ENCODE measurements at regions of chr15 and their contacts with region 1.

Region 1: GRCh38 chr15:44663409-44664308 is at the start of gene SPG11:
- DNase-seq: peak; percentile 94
- ATAC-seq: peak; percentile 90
- H3K4me3 ChIP-seq: peak within 1 kb of the TSS; percentile 67 to 96
- H3K27ac ChIP-seq: peak within 1 kb of the TSS; percentile 87
- H3K4me1 ChIP-seq: peaks cover 5 to 13% of the 10 kb centered on the region in 2 experiments
- H3K27me3 ChIP-seq: no peaks in the 10 kb centered on the region
- CTCF ChIP-seq: peak; percentile 79 to 90 (median 81)
- POLR2A ChIP-seq: peak; percentile 83
- RAD21 ChIP-seq: peak; percentile 98
- total RNA-seq, gene SPG11: 34.8 TPM

Region 2: DNA sequence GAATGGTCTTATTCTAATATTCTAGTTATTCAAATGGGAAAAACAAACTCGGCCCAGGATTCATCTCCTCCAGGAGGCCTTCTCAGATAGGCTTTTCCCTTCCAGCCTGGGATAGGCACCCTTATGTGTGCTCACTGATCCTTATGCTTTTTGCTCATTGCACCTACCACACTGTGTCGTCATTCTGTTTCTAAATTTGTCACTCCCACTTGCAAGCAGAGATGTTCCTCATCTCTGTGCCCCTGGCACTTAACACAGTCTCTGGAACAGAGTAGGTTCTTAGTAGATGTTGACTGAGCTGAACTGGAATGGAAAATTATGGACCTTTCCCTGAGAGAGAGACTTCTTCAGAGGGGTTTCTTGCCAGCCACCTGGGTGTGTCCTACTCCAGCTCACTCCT is 18.6 kb after region 1 on chr15:
- CTCF ChIA-PET with region 1: interaction called, 20 read pairs
- POLR2A ChIA-PET with region 1: interaction called, 12 read pairs
- RAD21 ChIA-PET with region 1: interaction called in 1 of 2 experiments, 3 read pairs
- intact Hi-C with region 1: no loop called
- DNase-seq: no peak
- ATAC-seq: no peak
- H3K4me3 ChIP-seq: no peak overlapping the region
- H3K27ac ChIP-seq: no peak overlapping the region
- H3K4me1 ChIP-seq: peaks cover 6 to 20% of the 10 kb centered on the region in 2 experiments; a peak in 3 of 4 replicates
- H3K27me3 ChIP-seq: no peaks in the 10 kb centered on the region
- CTCF ChIP-seq: no peak
- POLR2A ChIP-seq: no peak
- RAD21 ChIP-seq: no peak

Region 3: DNA sequence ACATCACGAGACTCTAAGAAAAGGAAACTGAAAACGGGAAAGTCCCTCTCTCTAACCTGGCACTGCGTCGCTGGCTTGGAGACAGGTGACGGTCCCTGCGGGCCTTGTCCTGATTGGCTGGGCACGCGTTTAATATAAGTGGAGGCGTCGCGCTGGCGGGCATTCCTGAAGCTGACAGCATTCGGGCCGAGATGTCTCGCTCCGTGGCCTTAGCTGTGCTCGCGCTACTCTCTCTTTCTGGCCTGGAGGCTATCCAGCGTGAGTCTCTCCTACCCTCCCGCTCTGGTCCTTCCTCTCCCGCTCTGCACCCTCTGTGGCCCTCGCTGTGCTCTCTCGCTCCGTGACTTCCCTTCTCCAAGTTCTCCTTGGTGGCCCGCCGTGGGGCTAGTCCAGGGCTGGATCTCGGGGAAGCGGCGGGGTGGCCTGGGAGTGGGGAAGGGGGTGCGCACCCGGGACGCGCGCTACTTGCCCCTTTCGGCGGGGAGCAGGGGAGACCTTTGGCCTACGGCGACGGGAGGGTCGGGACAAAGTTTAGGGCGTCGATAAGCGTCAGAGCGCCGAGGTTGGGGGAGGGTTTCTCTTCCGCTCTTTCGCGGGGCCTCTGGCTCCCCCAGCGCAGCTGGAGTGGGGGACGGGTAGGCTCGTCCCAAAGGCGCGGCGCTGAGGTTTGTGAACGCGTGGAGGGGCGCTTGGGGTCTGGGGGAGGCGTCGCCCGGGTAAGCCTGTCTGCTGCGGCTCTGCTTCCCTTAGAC is 47.9 kb after region 1 on chr15 and contains the start of gene B2M:
- CTCF ChIA-PET with region 1: interaction called, 22 read pairs
- POLR2A ChIA-PET with region 1: interaction called, 27 read pairs
- RAD21 ChIA-PET with region 1: interaction called, 5 read pairs
- intact Hi-C with region 1: loop called (anchors 1 kb)
- DNase-seq: peak; percentile 90
- ATAC-seq: peak; percentile 91
- H3K4me3 ChIP-seq: peak within 1 kb of the TSS; percentile 84 to 93
- H3K27ac ChIP-seq: peak within 1 kb of the TSS; percentile 69
- H3K4me1 ChIP-seq: peaks cover 11 to 28% of the 10 kb centered on the region in 2 experiments; a peak in 3 of 4 replicates
- H3K27me3 ChIP-seq: no peaks in the 10 kb centered on the region
- CTCF ChIP-seq: no peak
- POLR2A ChIP-seq: peak; percentile 98
- RAD21 ChIP-seq: no peak
- total RNA-seq, gene B2M: 388 TPM

Region 4: GRCh38 chr15:44728576-44729407 is 65.1 kb after region 1 on chr15:
- CTCF ChIA-PET with region 1: interaction called, 23 read pairs
- POLR2A ChIA-PET with region 1: interaction called, 24 read pairs
- RAD21 ChIA-PET with region 1: interaction called, 3 to 6 read pairs
- intact Hi-C with region 1: loop called (anchors 1 kb)
- DNase-seq: peak; percentile 94
- ATAC-seq: peak; percentile 92
- H3K4me3 ChIP-seq: peak overlapping the region; percentile 58 to 67
- H3K27ac ChIP-seq: peak overlapping the region; percentile 93
- H3K4me1 ChIP-seq: peaks cover 30 to 34% of the 10 kb centered on the region in 2 experiments
- H3K27me3 ChIP-seq: no peaks in the 10 kb centered on the region
- CTCF ChIP-seq: no peak
- POLR2A ChIP-seq: peak; percentile 73
- RAD21 ChIP-seq: no peak

Measured in HCT116 (cell line).